Heart right ventricle (tissue), 16 donors: ENCODE measurements at regions of chr15 and their contacts with region 1.

Region 1: DNA sequence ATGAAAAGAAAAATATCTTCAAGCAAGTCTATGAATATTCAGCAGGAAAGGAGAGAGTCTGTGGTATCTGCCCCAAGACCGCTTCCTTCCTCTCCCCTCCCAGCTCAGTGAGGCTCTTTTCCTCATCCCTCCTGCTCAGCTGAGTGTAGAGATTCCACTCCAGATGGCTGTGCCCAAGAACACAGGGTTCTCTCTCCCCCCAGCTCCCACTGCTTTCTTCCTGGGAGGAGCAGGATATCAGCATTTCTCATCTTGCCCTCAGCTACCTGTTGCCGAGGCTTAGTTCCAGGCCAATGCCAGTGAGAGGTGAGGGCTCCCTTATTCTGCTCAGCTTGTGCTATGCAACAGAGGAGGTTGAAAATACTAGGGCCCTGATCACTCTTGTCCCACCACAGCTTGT is 211.9 kb downstream of the SV2B start:
- DNase-seq: no peak
- ATAC-seq: no peak
- H3K4me3 ChIP-seq: no peak overlapping the region
- H3K27ac ChIP-seq: peak overlapping the region in 1 of 10 donors; percentile 5
- H3K4me1 ChIP-seq: peaks cover 0 to 22% (median 0%) of the 10 kb centered on the region in 9 donors
- H3K27me3 ChIP-seq: peaks cover 0 to 13% (median 0%) of the 10 kb centered on the region in 7 donors
- CTCF ChIP-seq: no peak

Region 2: GRCh38 chr15:91652610-91653207 is 340.7 kb after region 1 on chr15:
- intact Hi-C with region 1: loop called in 1 of 10 experiments (anchors 10 kb)
- DNase-seq: no peak
- ATAC-seq: no peak
- H3K4me3 ChIP-seq: no peak overlapping the region
- H3K27ac ChIP-seq: no peak overlapping the region
- H3K4me1 ChIP-seq: no peaks in the 10 kb centered on the region
- H3K27me3 ChIP-seq: peaks cover 0 to 28% (median 4%) of the 10 kb centered on the region in 7 donors
- CTCF ChIP-seq: no peak